Psoas muscle (tissue), 8 donors: ENCODE measurements at regions of chr5 and their contacts with region 1.

Region 1: GRCh38 chr5:141618804-141619554 is at the start of gene DIAPH1:
- DNase-seq: peak; percentile 99
- ATAC-seq: peak; percentile 89 to 97 (median 94)
- H3K4me3 ChIP-seq: peak within 1 kb of the TSS; percentile 99
- H3K27ac ChIP-seq: peak within 1 kb of the TSS; percentile 100
- H3K4me1 ChIP-seq: peaks cover 30% of the 10 kb centered on the region
- H3K27me3 ChIP-seq: no peaks in the 10 kb centered on the region
- CTCF ChIP-seq: peak; percentile 97
- total RNA-seq, gene DIAPH1: 112 to 217 (median 160) TPM

Region 2: DNA sequence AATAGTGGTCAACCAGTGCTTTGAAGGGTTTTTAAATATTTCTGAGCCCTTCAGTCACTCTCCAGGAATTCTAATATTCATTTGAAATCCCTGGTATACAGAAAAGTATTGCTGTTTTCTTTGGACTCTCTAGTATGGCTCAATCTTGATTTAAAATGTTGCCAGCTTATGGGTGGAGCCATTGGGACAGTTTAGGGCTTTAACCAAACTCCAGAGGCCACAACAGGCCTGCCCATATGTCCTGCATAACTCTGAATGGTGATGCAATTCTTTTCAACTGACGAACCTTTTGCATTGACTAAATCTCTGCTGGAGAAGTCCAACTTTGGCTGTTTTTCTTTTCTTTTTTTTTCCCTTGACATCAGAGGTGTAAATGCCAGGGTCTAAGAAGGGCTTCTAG is 1227.7 kb before region 1 on chr5:
- intact Hi-C with region 1: loop called in 1 of 2 experiments (anchors 5 kb)
- DNase-seq: no peak
- ATAC-seq: no peak
- H3K4me3 ChIP-seq: no peak overlapping the region
- H3K27ac ChIP-seq: no peak overlapping the region
- H3K4me1 ChIP-seq: no peaks in the 10 kb centered on the region
- H3K27me3 ChIP-seq: no peaks in the 10 kb centered on the region
- CTCF ChIP-seq: no peak

Region 3: DNA sequence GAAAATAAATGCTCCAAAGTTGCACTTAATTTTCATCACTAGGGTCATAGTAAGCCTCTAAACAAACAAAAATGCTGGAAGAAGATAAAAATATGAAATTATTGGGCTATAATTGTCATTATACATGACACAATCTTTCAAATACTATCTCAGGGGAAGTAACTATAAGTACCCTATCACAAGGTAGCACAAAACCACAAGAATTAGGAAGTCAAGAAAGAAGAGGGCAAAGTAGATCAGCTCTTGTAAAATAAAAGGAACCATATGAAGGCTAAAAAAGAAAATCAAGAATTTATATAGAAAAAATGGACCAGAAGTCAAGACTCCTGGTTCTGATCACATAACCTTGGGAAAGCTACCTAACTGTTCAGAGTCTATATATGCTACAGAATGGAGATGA is 48.3 kb before region 1 on chr5:
- intact Hi-C with region 1: loop called (anchors 10 kb)
- DNase-seq: no peak
- ATAC-seq: no peak
- H3K4me3 ChIP-seq: no peak overlapping the region
- H3K27ac ChIP-seq: no peak overlapping the region
- H3K4me1 ChIP-seq: no peaks in the 10 kb centered on the region
- H3K27me3 ChIP-seq: no peaks in the 10 kb centered on the region
- CTCF ChIP-seq: no peak

Region 4: DNA sequence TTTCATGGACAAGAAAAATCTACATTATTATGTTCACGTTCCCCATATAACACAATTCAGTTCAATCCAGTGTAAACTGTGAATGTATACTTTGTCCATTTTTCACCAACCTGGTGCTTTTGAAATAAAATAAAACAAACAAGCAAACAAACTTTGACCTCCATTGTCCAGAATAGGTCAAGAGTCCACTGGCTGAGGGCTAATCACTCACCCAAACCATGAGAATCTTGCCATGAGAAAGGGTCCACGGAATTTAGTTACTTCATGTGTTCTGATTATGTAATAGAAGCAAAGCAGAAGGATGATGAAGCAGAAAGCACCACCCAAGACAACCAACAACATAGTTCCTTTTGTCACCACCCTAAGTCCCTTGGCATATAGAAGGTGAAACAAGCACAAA is 28.9 kb before region 1 on chr5:
- intact Hi-C with region 1: loop called (anchors 1 to 2 kb)
- DNase-seq: no peak
- ATAC-seq: no peak
- H3K4me3 ChIP-seq: no peak overlapping the region
- H3K27ac ChIP-seq: no peak overlapping the region
- H3K4me1 ChIP-seq: peaks cover 35% of the 10 kb centered on the region
- H3K27me3 ChIP-seq: no peaks in the 10 kb centered on the region
- CTCF ChIP-seq: no peak

Region 5: GRCh38 chr5:141597394-141597793 is 21.6 kb before region 1 on chr5:
- intact Hi-C with region 1: loop called in 1 of 2 experiments (anchors 1 kb)
- DNase-seq: no peak
- ATAC-seq: peak in 1 of 4 donors; percentile 2
- H3K4me3 ChIP-seq: no peak overlapping the region
- H3K27ac ChIP-seq: peak overlapping the region; percentile 95
- H3K4me1 ChIP-seq: peaks cover 81% of the 10 kb centered on the region
- H3K27me3 ChIP-seq: no peaks in the 10 kb centered on the region
- CTCF ChIP-seq: no peak

Region 6: DNA sequence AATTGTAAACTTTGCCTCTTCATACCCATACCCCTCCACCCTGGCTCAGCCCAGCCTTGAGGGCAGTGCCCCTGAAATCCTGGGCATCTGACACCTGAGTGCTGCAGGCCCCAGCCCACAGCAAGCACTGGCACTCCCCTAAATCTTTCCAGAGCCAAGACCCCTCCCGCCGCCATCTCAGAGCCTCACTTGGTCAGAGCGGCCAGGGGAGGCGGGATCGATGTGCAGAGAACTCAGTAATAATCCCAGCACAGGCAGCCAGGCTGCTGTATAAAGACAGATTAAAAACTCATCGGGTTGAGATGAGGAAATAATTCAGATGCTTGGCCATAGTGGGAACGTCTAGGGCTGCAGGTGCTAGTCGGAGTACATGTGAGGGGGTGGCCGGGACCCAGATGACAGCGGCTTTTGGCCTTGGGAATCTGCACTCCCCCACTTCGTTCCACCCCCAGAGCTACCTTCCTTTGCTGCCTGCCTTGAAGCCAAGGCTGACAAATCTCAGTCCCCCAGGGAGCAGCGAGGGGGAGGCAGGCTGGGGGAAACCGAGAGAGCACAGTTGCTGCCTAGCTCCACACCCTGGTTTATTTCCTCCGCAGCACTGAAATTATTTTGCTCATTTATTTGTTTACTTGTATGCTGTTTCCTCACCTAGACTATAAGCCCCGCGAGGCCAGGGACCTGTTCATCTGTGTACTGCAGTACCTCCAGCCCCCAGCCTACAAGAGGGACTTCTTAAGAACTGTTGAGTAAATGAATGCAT is 82.6 kb after region 1 on chr5:
- intact Hi-C with region 1: no loop called
- DNase-seq: no peak
- ATAC-seq: peak in 1 of 4 donors; percentile 11
- H3K4me3 ChIP-seq: peak overlapping the region; percentile 68
- H3K27ac ChIP-seq: no peak overlapping the region
- H3K4me1 ChIP-seq: peaks cover 13% of the 10 kb centered on the region
- H3K27me3 ChIP-seq: peaks cover 0 to 77% (median 14%) of the 10 kb centered on the region in 3 donors
- CTCF ChIP-seq: no peak

Region 7: DNA sequence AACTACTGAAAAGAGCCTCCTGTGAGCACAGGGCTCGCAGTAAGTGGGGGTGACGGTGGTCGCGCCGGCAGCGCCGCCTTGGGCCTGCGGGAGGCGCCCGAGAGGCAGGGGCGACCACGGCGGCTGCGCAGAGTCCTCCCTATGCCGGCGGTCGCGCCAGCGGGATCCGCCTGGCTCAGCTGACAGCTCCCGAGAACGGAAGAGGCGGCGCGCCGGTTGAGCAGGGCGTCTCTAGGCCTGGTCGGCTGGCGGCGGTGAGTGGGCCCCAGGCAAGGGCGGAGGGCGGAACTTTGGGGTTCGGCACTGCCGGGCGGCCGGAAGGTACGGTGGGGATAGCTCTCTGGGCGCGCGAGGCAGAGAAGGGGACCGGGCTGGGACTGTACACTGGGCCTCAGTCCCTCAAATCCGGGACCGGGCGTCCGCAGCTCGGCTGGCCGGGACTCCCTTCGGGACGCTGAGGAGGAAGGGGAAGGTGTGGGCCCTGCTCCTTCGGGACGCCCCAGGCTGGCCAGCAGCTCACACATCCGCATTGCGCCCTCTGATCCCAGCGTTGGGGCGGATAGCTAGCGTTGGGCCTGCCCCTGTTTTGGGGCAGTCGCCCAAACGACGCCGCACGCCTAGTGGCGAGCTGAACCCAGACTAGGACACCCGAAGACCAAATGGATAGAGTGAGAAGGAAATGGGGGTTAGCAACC is 350.1 kb after region 1 on chr5 and contains the start of gene RNF14:
- intact Hi-C with region 1: no loop called
- DNase-seq: peak; percentile 95 to 97
- ATAC-seq: peak; percentile 96 to 98 (median 97)
- H3K4me3 ChIP-seq: peak within 1 kb of the TSS; percentile 87
- H3K27ac ChIP-seq: peak within 1 kb of the TSS; percentile 98
- H3K4me1 ChIP-seq: peaks cover 18% of the 10 kb centered on the region
- H3K27me3 ChIP-seq: no peaks in the 10 kb centered on the region
- CTCF ChIP-seq: peak; percentile 97
- total RNA-seq, gene RNF14: 54.1 to 89.6 (median 71.8) TPM